Activated CD4-positive, alpha-beta memory T cell treated with anti-CD3 and anti-CD28 coated beads for 36 hours (primary cell): ENCODE measurements at regions of chr5 and their contacts with region 1.

Region 1: GRCh38 chr5:90474235-90475109 is at the starts of genes MBLAC2 and POLR3G:
- DNase-seq: peak; percentile 96
- H3K4me3 Mint-ChIP-seq: peak within 1 kb of the TSS; percentile 92
- H3K27ac Mint-ChIP-seq: peak within 1 kb of the TSS; percentile 88
- H3K4me1 Mint-ChIP-seq: peaks cover 23% of the 10 kb centered on the region
- H3K27me3 Mint-ChIP-seq: no peaks in the 10 kb centered on the region
- total RNA-seq, gene MBLAC2: 3.3 to 3.5 TPM
- total RNA-seq, gene POLR3G: 9.6 to 9.7 TPM

Region 2: DNA sequence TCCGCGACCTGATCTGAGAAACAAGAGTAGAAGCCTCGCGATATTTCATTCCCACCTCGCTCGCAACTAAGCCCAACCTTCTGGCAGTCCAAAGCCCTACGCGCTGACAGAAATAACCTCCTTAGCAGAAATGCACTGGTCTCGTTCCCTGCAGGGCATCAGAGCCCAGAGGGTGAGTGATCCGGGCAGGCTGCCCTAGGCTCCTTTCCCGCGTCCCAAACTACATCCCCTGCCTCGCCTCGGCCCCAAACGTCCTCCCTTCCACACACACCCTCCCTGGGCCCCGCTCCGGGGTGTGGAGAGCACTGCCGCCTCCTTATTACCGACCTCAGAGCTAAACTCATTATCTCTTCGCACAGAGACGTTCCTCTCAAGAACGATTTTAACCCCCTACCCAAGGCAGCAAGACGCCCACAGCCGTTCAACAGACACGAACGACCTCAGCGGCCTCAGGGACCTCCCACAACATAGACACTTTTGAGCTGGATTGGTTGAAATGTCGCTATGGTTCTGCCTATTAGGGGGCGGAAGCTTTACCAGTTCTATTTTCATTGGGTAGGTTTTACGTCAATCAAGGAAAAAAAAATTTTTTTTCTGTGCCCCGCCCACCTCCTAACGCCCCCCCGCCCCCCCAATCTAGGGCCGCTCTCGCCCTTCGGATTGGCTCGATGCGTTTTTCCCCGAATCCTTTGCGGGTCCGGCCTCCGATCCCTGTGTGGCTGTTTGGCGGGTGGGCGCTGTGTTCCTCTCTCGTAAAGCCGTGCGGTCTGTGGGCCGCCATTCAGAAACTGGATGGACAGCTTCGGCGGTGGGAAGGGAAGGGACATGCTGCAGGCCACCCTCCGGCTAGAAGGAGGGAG is 64.9 kb before region 1 on chr5 and contains the start of gene CETN3:
- CTCF ChIA-PET with region 1: interaction called, 4 read pairs
- POLR2A ChIA-PET with region 1: interaction called, 15 read pairs
- intact Hi-C with region 1: loop called (anchors 1 kb)
- DNase-seq: peak; percentile 94
- H3K4me3 Mint-ChIP-seq: no peak within 1 kb of the TSS
- H3K27ac Mint-ChIP-seq: no peak within 1 kb of the TSS
- H3K4me1 Mint-ChIP-seq: peaks cover 16% of the 10 kb centered on the region
- H3K27me3 Mint-ChIP-seq: no peaks in the 10 kb centered on the region
- total RNA-seq, gene CETN3: 49.8 to 51.8 TPM

Region 3: GRCh38 chr5:90440644-90441043 is 33.8 kb before region 1 on chr5:
- CTCF ChIA-PET with region 1: interaction called, 4 read pairs
- POLR2A ChIA-PET with region 1: interaction called, 3 read pairs
- intact Hi-C with region 1: loop called (anchors 1 kb)
- DNase-seq: no peak
- H3K4me3 Mint-ChIP-seq: no peak overlapping the region
- H3K27ac Mint-ChIP-seq: no peak overlapping the region
- H3K4me1 Mint-ChIP-seq: peaks cover 8% of the 10 kb centered on the region
- H3K27me3 Mint-ChIP-seq: no peaks in the 10 kb centered on the region

Region 4: GRCh38 chr5:90529194-90529938 is 54.9 kb after region 1 on chr5 and contains the start of gene LYSMD3:
- CTCF ChIA-PET with region 1: interaction called, 10 read pairs
- POLR2A ChIA-PET with region 1: interaction called, 12 read pairs
- intact Hi-C with region 1: loop called (anchors 1 kb)
- DNase-seq: peak; percentile 97
- H3K4me3 Mint-ChIP-seq: peak within 1 kb of the TSS; percentile 100
- H3K27ac Mint-ChIP-seq: peak within 1 kb of the TSS; percentile 96
- H3K4me1 Mint-ChIP-seq: peaks cover 24% of the 10 kb centered on the region
- H3K27me3 Mint-ChIP-seq: peaks cover 10% of the 10 kb centered on the region
- total RNA-seq, gene LYSMD3: 12.6 to 13.0 TPM

Region 5: GRCh38 chr5:90546216-90546837 is 71.9 kb after region 1 on chr5:
- CTCF ChIA-PET with region 1: no interaction called
- POLR2A ChIA-PET with region 1: no interaction called
- intact Hi-C with region 1: no loop called
- DNase-seq: no peak
- H3K4me3 Mint-ChIP-seq: no peak overlapping the region
- H3K27ac Mint-ChIP-seq: no peak overlapping the region
- H3K4me1 Mint-ChIP-seq: no peaks in the 10 kb centered on the region
- H3K27me3 Mint-ChIP-seq: peaks cover 17% of the 10 kb centered on the region

Region 6: DNA sequence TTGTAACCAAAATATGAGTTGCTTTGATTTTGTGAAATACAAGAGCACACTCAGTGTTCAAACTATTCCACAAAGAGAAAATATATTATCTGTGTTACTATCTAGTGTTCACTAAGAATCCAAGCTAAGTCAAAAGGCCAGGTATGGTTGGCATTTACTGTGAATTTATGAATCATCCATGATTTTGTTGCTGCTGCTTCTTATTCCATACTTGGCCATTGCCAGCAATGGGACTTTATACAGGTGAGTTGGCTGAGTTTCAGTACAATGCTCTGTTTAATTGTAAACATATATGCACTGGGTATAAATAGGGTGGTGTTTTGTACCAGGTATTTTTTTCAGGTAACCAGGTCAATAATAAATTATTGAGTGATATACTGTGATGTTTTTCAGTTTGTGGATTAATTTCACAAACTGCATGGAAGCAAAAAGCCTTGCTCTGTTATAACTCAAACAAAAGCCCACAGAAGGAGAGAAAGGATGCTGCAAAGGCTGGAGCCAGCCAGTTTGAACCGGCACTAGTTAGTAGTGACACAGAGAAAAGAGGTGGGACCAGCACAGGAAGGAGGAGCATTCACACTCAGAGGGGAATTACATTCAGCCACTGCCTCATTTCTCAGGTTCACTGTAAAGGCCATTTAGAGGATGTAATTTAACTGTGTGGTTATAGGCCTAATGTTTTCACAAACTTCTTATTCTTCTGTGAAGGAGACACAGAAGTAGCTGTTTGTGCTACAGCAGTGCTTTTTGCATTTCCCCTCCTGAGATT is 465.9 kb after region 1 on chr5:
- CTCF ChIA-PET with region 1: no interaction called
- POLR2A ChIA-PET with region 1: no interaction called
- intact Hi-C with region 1: loop called (anchors 1 kb)
- DNase-seq: peak; percentile 75
- H3K4me3 Mint-ChIP-seq: no peak overlapping the region
- H3K27ac Mint-ChIP-seq: peak overlapping the region; percentile 32
- H3K4me1 Mint-ChIP-seq: peaks cover 7% of the 10 kb centered on the region
- H3K27me3 Mint-ChIP-seq: no peaks in the 10 kb centered on the region